ENCODE measurements at regions of chr11 and their contacts with region 1.

Region 1: DNA sequence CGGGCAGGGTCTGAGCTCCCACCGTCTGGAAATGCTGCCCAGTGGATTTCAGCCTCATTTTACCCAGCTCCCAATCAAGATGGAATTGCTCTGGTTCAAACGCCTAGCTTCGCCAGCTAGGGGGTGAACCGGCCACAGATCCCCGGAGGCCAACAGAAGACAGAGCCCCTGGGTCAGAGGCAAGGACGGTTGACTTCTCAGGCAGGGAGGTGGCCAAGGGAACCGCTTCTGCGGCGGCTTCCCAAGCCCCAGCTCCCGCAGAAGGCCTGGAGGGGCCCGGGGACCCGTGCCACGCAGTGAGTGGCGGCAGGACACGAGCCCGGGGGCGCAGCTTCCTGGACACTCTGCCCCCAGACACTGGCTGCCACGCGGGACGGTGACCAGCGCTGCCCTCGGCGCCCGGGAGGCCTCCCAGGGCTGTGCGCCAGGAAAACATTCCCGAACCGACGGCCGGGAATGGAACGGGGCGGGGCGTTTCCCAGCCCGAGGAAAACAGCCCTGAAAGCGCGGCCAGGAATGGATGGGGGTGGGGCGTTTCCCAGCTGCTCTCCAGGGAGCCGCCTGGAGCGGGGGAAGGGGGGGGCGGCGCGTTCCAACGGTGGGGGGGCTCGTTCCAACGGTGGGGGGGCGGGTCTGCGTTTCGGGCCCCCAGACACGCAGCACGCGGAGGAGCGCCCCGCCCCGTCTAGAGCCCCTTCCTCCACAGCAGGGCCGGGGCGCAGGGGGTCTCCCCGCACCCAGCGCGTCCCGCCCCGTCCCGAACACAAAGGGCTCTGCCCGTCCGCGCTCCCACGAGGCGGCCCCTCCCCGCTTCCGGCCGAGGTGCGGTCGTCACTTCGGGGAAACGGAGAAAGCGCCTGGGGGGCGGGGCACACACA is 13.5 kb upstream of the B4GALNT4 start:
- DNase-seq: peak; percentile 96
- H3K4me3 ChIP-seq: peak overlapping the region in 1 of 3 experiments; percentile 14
- H3K27ac ChIP-seq: peak overlapping the region; percentile 96
- H3K4me1 ChIP-seq: peaks cover 8% of the 10 kb centered on the region
- H3K27me3 ChIP-seq: no peaks in the 10 kb centered on the region
- CTCF ChIP-seq: no peak
- POLR2A ChIP-seq: peak; percentile 77

Region 2: DNA sequence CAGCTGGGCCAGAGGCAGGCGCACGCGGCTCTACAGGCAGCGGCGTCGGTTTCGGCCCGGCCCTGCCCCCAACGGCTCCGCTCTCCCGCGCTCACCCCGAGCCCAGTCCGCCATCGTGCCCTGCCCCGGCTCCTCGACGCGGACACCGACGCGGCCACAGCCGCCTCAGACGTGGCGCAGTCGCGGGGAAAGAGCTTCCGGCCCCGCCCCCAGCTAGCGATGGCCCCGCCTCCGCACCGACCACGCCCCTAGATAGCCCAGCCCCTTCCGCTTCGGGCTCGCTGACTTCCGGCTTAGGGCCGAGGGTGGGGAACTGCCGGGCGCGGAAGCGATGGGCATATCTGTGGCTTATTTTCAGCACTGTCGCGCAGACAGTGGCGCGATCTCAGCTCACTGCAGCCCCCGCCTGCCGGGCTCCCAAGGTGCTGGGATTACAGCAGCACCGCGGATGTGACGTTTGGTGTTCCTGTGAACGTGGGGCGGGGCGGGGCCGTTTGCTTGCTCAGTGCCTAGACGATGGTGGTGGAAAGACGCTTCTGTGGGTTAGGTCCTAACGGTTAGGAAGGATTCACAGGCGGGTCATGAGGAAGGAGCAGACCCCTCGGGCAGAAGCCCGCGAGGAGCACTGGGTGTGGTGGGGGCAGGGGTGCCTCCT is 148.5 kb before region 1 on chr11 and contains the starts of genes BET1L and RIC8A:
- CTCF ChIA-PET with region 1: interaction called, 4 read pairs
- POLR2A ChIA-PET with region 1: interaction called, 4 read pairs
- dilution Hi-C with region 1: no loop called
- intact Hi-C with region 1: loop called (anchors 5 kb)
- DNase-seq: peak; percentile 97
- H3K4me3 ChIP-seq: peak within 1 kb of the TSS; percentile 68 to 92 (median 74)
- H3K27ac ChIP-seq: peak within 1 kb of the TSS; percentile 96
- H3K4me1 ChIP-seq: peaks cover 23% of the 10 kb centered on the region
- H3K27me3 ChIP-seq: no peaks in the 10 kb centered on the region
- CTCF ChIP-seq: no peak
- POLR2A ChIP-seq: peak; percentile 84
- total RNA-seq, gene BET1L: 31.0 and 35.5 TPM in 2 replicates
- total RNA-seq, gene RIC8A: 112 and 119 TPM in 2 replicates

Region 3: GRCh38 chr11:225734-226453 is 129.9 kb before region 1 on chr11:
- CTCF ChIA-PET with region 1: no interaction called
- POLR2A ChIA-PET with region 1: no interaction called
- dilution Hi-C with region 1: no loop called
- intact Hi-C with region 1: no loop called
- DNase-seq: no peak
- H3K4me3 ChIP-seq: no peak overlapping the region
- H3K27ac ChIP-seq: no peak overlapping the region
- H3K4me1 ChIP-seq: no peaks in the 10 kb centered on the region
- H3K27me3 ChIP-seq: no peaks in the 10 kb centered on the region
- CTCF ChIP-seq: no peak
- POLR2A ChIP-seq: no peak

Region 4: GRCh38 chr11:236774-237767 is 118.7 kb before region 1 on chr11 and contains the start of gene PSMD13:
- CTCF ChIA-PET with region 1: no interaction called
- POLR2A ChIA-PET with region 1: no interaction called
- dilution Hi-C with region 1: no loop called
- intact Hi-C with region 1: loop called (anchors 1 kb)
- DNase-seq: peak; percentile 85
- H3K4me3 ChIP-seq: peak within 1 kb of the TSS; percentile 81 to 100 (median 99)
- H3K27ac ChIP-seq: peak within 1 kb of the TSS; percentile 92
- H3K4me1 ChIP-seq: peaks cover 16% of the 10 kb centered on the region
- H3K27me3 ChIP-seq: no peaks in the 10 kb centered on the region
- CTCF ChIP-seq: no peak
- POLR2A ChIP-seq: peak; percentile 83
- total RNA-seq, gene PSMD13: 168 and 179 TPM in 2 replicates

Region 5: GRCh38 chr11:257766-258493 is 97.9 kb before region 1 on chr11:
- CTCF ChIA-PET with region 1: no interaction called
- POLR2A ChIA-PET with region 1: no interaction called
- dilution Hi-C with region 1: no loop called
- intact Hi-C with region 1: no loop called
- DNase-seq: no peak
- H3K4me3 ChIP-seq: no peak overlapping the region
- H3K27ac ChIP-seq: no peak overlapping the region
- H3K4me1 ChIP-seq: no peaks in the 10 kb centered on the region
- H3K27me3 ChIP-seq: no peaks in the 10 kb centered on the region
- CTCF ChIP-seq: no peak
- POLR2A ChIP-seq: no peak

Region 6: GRCh38 chr11:316031-316701 is 39.7 kb before region 1 on chr11:
- CTCF ChIA-PET with region 1: interaction called, 3 read pairs
- POLR2A ChIA-PET with region 1: interaction called, 4 read pairs
- dilution Hi-C with region 1: no loop called
- intact Hi-C with region 1: loop called (anchors 1 kb)
- DNase-seq: no peak
- H3K4me3 ChIP-seq: no peak overlapping the region
- H3K27ac ChIP-seq: no peak overlapping the region
- H3K4me1 ChIP-seq: peaks cover 7% of the 10 kb centered on the region
- H3K27me3 ChIP-seq: peaks cover 19 to 28% of the 10 kb centered on the region in 2 experiments
- CTCF ChIP-seq: no peak
- POLR2A ChIP-seq: no peak

Region 7: DNA sequence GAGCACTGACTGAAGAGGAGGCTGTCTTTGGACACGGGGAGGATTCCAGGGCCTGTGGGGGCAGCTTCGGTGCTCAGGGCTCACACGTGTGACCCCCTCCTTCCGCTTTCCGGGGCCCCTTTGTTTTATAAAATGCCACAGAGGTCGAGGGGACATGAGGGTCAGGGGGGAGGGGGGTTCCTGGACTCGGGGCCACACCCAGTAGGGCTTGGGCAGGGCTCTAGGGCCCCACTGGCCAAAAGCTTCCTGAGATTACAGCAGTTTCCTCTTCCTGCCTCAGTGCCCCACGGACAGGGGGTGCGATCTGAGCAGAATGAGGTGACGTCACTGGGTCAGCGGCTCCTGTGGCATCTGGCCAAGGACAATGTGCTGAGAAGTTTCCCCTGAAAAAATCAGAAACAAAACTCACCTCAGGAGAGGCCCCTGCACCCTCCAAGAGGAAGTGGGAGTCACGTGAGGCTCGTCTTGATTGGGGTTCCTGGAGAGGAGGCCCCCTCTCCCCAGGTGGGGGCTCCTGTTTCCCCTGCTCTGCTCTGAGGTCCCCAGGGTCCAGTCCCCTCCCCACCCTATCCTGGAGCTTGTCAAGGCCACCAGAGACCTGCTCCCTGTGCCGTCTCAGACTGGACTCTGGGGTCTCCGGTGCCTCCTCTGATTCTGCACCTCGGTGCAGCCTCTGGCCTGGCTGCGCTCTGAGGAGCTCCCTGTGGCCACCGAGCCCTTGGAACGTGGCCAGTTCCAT is 28.8 kb before region 1 on chr11:
- CTCF ChIA-PET with region 1: interaction called, 4 read pairs
- POLR2A ChIA-PET with region 1: interaction called, 3 read pairs
- dilution Hi-C with region 1: no loop called
- intact Hi-C with region 1: loop called (anchors 2 kb)
- DNase-seq: peak; percentile 84
- H3K4me3 ChIP-seq: no peak overlapping the region
- H3K27ac ChIP-seq: peak overlapping the region; percentile 59
- H3K4me1 ChIP-seq: peaks cover 15% of the 10 kb centered on the region
- H3K27me3 ChIP-seq: no peaks in the 10 kb centered on the region
- CTCF ChIP-seq: no peak
- POLR2A ChIP-seq: peak; percentile 20

Region 8: GRCh38 chr11:335779-336658 is 19.8 kb before region 1 on chr11:
- CTCF ChIA-PET with region 1: interaction called, 5 read pairs
- POLR2A ChIA-PET with region 1: interaction called, 13 read pairs
- dilution Hi-C with region 1: no loop called
- intact Hi-C with region 1: no loop called
- DNase-seq: peak; percentile 81
- H3K4me3 ChIP-seq: peak overlapping the region in 1 of 3 experiments; percentile 1
- H3K27ac ChIP-seq: peak overlapping the region; percentile 43
- H3K4me1 ChIP-seq: peaks cover 15% of the 10 kb centered on the region
- H3K27me3 ChIP-seq: peaks cover 0 to 1% of the 10 kb centered on the region in 2 experiments
- CTCF ChIP-seq: no peak
- POLR2A ChIP-seq: no peak

Region 9: GRCh38 chr11:373716-374551 is 18.1 kb after region 1 on chr11:
- CTCF ChIA-PET with region 1: no interaction called
- POLR2A ChIA-PET with region 1: no interaction called
- dilution Hi-C with region 1: no loop called
- intact Hi-C with region 1: no loop called
- DNase-seq: no peak
- H3K4me3 ChIP-seq: no peak overlapping the region
- H3K27ac ChIP-seq: no peak overlapping the region
- H3K4me1 ChIP-seq: no peaks in the 10 kb centered on the region
- H3K27me3 ChIP-seq: peaks cover 4 to 7% of the 10 kb centered on the region in 2 experiments
- CTCF ChIP-seq: no peak
- POLR2A ChIP-seq: no peak

Region 10: DNA sequence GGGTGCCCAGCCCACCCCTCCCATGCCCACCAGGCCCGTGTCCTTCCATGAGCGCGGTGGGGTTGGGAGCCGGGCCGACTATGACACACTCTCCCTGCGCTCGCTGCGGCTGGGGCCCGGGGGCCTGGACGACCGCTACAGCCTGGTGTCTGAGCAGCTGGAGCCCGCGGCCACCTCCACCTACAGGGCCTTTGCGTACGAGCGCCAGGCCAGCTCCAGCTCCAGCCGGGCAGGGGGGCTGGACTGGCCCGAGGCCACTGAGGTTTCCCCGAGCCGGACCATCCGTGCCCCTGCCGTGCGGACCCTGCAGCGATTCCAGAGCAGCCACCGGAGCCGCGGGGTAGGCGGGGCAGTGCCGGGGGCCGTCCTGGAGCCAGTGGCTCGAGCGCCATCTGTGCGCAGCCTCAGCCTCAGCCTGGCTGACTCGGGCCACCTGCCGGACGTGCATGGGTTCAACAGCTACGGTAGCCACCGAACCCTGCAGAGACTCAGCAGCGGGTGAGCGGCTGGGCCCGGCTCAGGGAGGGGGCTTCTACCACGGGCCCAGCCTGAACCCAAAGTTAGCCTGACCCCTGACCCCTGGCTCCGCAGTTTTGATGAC is 41.2 kb after region 1 on chr11:
- CTCF ChIA-PET with region 1: no interaction called
- POLR2A ChIA-PET with region 1: no interaction called
- dilution Hi-C with region 1: no loop called
- intact Hi-C with region 1: no loop called
- DNase-seq: peak; percentile 66
- H3K4me3 ChIP-seq: peak overlapping the region; percentile 6 to 43 (median 35)
- H3K27ac ChIP-seq: no peak overlapping the region
- H3K4me1 ChIP-seq: peaks cover 2% of the 10 kb centered on the region
- H3K27me3 ChIP-seq: peaks cover 0 to 3% of the 10 kb centered on the region in 2 experiments
- CTCF ChIP-seq: peak; percentile 44 to 80
- POLR2A ChIP-seq: no peak

Measured in endothelial cell of umbilical vein (primary cell).